ENCODE measurements at regions of chr9 and their contacts with region 1.

Region 1: GRCh38 chr9:71697882-71698281 is 70.4 kb downstream of the CEMIP2 start:
- DNase-seq: no peak
- H3K4me3 ChIP-seq: no peak overlapping the region
- H3K27ac ChIP-seq: no peak overlapping the region
- H3K4me1 ChIP-seq: peaks cover under 1% of the 10 kb centered on the region; the same call in 1 of the 2 replicates
- H3K27me3 ChIP-seq: no peaks in the 10 kb centered on the region
- CTCF ChIP-seq: no peak

Region 2: GRCh38 chr9:71716138-71716909 is 18.4 kb after region 1 on chr9:
- CTCF ChIA-PET with region 1: interaction called, 9 read pairs
- POLR2A ChIA-PET with region 1: no interaction called
- intact Hi-C with region 1: loop called (anchors 2 kb)
- DNase-seq: no peak
- H3K4me3 ChIP-seq: no peak overlapping the region
- H3K27ac ChIP-seq: no peak overlapping the region
- H3K4me1 ChIP-seq: no peaks in the 10 kb centered on the region; the same call in 1 of the 2 replicates
- H3K27me3 ChIP-seq: no peaks in the 10 kb centered on the region
- CTCF ChIP-seq: peak; percentile 77